Right cardiac atrium (tissue), 5 donors: ENCODE measurements at regions of chr12 and their contacts with region 1.

Region 1: DNA sequence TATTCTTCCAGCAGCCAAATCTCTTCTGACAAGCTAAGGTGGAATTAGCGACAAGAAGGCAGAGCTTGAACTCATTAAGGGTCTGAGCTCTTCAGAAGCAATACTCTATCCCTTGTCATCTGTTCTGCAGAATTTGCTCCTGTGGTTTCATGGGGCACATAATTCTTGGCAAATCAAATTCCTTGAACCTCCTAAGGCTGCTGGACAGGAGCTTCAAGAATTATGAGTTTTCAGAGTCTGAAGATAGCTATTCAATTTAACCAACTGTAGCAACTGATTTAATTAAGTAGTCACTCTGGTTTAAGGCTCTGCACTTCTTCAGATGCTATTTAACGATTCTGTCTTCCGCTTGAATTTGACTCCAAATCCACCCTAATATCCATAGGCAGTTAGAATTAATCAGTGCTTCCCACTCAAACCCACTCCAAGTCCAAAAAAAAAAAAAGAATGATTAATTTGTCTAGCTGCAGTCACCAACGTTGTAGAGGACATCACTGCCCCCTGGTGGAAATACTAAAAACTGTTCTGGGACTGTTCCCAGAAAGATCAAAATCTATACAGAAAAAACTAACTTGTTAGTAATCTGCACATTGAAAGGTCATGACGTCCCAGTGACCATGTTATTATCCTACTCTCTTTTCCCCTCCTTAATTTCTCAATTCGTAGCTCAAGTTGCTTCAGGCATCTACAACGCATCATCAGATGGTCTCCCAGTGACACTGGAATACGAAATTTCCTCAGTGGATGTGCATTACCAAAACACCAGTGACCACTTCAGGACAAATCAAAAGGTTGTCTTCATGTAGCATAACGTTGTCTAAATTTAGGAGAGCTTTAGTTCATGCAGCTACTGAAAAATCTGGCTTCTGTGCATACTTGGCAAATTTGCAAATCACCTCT is 169.8 kb downstream of the KIF21A start:
- DNase-seq: no peak
- ATAC-seq: no peak
- H3K4me3 ChIP-seq: no peak overlapping the region
- H3K27ac ChIP-seq: no peak overlapping the region
- H3K4me1 ChIP-seq: no peaks in the 10 kb centered on the region
- H3K27me3 ChIP-seq: no peaks in the 10 kb centered on the region

Region 2: DNA sequence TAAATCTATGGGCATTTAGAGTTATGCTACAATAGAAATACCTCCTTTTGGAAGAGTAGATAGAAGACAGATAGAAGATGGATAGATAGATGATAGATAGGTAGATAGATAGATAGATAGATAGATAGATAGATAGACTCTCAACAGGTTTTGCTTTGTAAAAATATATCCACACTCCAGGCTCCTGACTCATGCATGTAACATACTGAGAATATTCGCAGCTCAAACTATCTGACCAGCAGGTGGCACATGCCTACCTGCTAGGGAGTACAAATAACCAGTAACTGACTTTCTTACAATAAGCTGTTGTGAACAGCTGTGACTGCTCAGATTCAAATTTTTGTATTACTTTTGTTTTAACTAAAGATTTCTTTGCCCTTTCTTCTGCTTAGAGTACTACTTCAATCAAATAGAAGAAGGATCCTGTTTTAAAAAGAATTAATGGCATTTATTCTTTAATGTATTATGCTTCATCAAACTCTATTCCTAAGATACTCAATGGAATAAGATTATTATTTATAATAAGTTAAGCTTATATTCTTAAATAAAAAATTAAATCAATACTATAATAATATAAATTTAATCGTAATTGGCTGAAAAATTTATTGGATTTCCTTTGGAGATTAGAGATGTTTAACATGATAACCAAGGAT is 352.0 kb before region 1 on chr12:
- intact Hi-C with region 1: loop called in 1 of 4 experiments (anchors 10 kb)
- DNase-seq: peak in 2 of 3 donors; percentile 43 to 48
- ATAC-seq: peak; percentile 43 to 75
- H3K4me3 ChIP-seq: no peak overlapping the region
- H3K27ac ChIP-seq: no peak overlapping the region
- H3K4me1 ChIP-seq: no peaks in the 10 kb centered on the region
- H3K27me3 ChIP-seq: no peaks in the 10 kb centered on the region

Region 3: DNA sequence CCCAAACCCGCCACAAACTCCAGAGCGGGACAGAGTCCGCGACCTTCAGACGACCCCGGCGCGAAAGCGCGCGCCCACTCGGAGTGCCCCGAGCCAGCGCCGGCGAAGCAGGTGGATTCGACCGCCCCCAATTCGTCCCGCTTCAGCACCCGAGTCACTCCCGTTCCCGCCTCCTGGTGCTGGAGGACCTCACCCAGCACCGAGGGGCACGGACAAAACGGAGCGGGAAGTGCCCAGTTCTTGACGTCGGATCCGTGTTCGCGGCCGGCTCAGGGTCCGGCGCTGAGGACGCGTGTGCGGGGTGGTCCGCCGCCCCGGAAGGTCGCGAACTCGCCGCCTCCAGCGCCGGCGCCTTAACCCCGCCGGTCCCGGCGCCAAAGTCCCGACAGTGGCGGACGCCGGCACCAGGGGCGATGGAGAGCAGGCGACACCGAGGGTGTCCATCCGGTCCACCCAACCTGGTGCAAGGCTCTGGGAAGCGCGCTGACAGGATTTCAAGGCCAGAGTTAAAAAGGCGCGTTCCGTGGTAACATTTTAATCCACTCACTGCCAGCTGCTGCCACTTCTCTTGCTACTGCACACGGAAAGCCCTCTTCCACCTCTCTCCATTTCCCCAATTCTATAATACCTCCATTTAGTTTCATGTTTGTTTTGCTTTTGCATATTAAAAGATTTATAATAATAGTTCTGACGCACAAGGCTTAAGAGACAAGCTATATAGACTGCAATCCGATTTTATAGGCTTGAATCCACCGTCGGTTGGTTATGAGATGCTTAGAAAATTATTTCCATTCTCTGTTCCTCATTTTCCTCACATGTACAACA is 127.7 kb before region 1 on chr12:
- intact Hi-C with region 1: loop called in 3 of 4 experiments (anchors 5 to 10 kb)
- DNase-seq: peak; percentile 69 to 89 (median 87)
- ATAC-seq: peak; percentile 97 to 99
- H3K4me3 ChIP-seq: peak overlapping the region; percentile 54
- H3K27ac ChIP-seq: no peak overlapping the region
- H3K4me1 ChIP-seq: no peaks in the 10 kb centered on the region
- H3K27me3 ChIP-seq: no peaks in the 10 kb centered on the region